ENCODE measurements at regions of chr11 and their contacts with region 1.

Region 1: DNA sequence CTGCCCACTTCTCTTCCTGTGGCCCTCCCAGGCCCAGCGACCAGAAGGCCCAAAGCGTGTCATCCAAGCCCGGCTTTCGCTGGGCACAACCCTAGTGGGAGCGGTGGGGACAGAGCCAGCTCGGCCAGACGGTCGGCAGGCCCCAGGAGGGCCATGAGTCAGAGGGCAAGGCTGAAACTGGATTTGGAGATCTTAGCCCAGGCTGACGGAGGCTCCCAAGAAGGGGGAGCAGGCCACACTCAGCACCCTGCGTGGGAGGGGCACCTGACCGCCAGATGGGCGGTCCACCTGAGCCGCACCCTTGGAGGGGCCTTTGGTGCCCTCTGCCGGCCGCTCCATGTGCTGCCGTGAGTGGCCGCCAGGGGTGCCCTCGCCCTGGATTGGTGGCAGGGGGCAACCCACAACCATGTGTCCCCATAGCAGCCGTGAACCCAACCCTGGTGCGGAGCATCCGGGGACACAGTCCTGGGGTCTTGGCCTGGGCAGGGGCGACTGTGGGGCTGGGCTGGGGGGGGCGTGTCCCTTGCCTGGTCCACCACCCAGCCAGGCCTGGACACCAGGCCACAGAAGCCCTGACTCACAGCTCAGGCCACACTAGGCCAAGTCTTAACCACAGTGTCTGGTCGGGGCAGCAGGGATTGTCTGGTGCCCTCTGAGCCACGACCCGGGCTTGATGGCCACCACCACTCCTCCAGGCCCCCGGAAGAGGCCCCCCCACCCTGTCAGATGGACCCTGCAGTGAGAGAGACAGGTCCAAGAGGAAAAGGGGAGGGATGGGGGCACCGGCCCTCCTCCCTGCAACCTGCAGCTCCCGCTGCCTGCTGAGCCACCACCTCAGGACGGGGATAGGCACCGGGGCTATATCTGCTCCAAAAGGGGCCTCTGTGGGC is 19.2 kb upstream of the TALDO1 start:
- DNase-seq: peak; percentile 88 to 92 (median 89)
- H3K4me3 ChIP-seq: no peak overlapping the region
- H3K27ac ChIP-seq: peak overlapping the region; percentile 39 to 57
- H3K4me1 ChIP-seq: peaks cover 17% of the 10 kb centered on the region
- H3K27me3 ChIP-seq: no peaks in the 10 kb centered on the region
- CTCF ChIP-seq: peak; percentile 85 to 99 (median 99)
- EP300 ChIP-seq: no peak
- POLR2A ChIP-seq: no peak

Region 2: GRCh38 chr11:554824-555472 is 173.2 kb before region 1 on chr11:
- intact Hi-C with region 1: loop called (anchors 2 to 5 kb)
- DNase-seq: peak in 2 of 5 donors; percentile 66 to 73
- H3K4me3 ChIP-seq: peak overlapping the region; percentile 12
- H3K27ac ChIP-seq: peak overlapping the region in 1 of 2 donors; percentile 7
- H3K4me1 ChIP-seq: peaks cover 4% of the 10 kb centered on the region
- H3K27me3 ChIP-seq: peaks cover 3% of the 10 kb centered on the region
- CTCF ChIP-seq: peak; percentile 18 to 44 (median 32)
- EP300 ChIP-seq: no peak
- POLR2A ChIP-seq: no peak

Region 3: DNA sequence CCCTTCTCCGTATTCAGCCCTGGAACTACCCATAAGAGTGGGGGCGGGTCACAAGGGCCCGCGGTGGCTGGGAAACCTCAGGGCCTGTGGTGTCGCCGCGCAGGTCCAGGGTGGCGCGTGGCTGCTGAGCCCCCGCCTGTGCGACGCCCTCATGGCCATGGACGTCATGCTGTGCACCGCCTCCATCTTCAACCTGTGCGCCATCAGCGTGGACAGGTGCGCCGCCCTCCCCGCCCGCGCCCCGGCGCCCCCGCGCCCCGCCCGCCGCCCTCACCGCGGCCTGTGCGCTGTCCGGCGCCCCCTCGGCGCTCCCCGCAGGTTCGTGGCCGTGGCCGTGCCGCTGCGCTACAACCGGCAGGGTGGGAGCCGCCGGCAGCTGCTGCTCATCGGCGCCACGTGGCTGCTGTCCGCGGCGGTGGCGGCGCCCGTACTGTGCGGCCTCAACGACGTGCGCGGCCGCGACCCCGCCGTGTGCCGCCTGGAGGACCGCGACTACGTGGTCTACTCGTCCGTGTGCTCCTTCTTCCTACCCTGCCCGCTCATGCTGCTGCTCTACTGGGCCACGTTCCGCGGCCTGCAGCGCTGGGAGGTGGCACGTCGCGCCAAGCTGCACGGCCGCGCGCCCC is 88.7 kb before region 1 on chr11:
- intact Hi-C with region 1: no loop called
- DNase-seq: no peak
- H3K4me3 ChIP-seq: no peak overlapping the region
- H3K27ac ChIP-seq: no peak overlapping the region
- H3K4me1 ChIP-seq: peaks cover 7% of the 10 kb centered on the region
- H3K27me3 ChIP-seq: no peaks in the 10 kb centered on the region
- CTCF ChIP-seq: no peak
- EP300 ChIP-seq: no peak
- POLR2A ChIP-seq: no peak

Region 4: DNA sequence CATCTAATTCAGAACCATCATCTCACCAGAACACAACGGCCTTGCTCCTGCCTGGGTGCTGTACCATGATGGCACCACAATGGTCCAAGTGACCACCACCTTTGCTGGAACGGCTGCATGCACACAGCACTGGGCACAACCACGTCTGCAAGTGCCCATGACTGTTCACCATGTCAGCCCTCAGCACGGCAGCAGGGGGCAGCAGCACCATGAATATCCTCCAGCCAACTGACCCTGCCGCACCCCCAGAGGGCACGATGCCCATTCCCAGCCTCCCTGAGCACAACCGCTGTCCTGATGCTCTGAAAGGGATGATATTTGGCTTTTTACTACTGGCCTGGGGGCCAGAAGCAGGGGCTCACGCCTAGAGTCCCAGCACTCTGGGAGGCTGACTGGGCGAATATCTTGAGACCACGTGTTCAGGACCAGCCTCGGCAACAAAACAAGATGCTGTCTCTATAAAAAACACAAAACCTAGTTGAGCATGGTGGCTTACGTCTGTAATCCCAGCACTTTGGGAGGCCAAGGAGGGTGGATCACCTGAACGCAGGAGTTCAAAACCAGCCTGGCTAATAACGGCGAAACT is 65.3 kb before region 1 on chr11:
- intact Hi-C with region 1: loop called in 3 of 4 experiments (anchors 2 to 5 kb)
- DNase-seq: peak; percentile 68 to 87 (median 81)
- H3K4me3 ChIP-seq: no peak overlapping the region
- H3K27ac ChIP-seq: no peak overlapping the region
- H3K4me1 ChIP-seq: peaks cover 6% of the 10 kb centered on the region
- H3K27me3 ChIP-seq: no peaks in the 10 kb centered on the region
- CTCF ChIP-seq: peak; percentile 55 to 67 (median 67)
- EP300 ChIP-seq: no peak
- POLR2A ChIP-seq: peak; percentile 12

Region 5: DNA sequence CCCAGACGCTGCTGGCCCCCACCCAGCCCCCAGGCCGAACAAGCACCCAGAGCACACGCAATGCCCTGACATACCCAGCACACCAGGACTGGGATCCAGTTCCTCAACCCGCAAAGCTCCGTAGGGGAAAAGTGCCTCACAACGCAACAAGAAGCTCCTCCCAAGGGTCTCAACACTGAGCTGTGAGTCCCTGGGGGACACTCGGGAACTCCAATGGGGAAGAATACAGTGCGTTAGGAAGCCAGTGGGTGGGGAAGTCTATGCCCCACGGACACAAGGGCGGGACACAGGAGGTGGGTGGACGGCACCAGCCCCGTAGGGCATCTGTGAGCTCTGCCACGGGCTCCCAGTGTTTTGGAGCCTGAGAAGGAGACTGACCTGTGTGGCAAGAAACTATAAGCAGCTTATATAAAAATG is 34.7 kb before region 1 on chr11:
- intact Hi-C with region 1: no loop called
- DNase-seq: no peak
- H3K4me3 ChIP-seq: no peak overlapping the region
- H3K27ac ChIP-seq: no peak overlapping the region
- H3K4me1 ChIP-seq: peaks cover 13% of the 10 kb centered on the region
- H3K27me3 ChIP-seq: no peaks in the 10 kb centered on the region
- CTCF ChIP-seq: no peak
- EP300 ChIP-seq: no peak
- POLR2A ChIP-seq: no peak

Region 6: DNA sequence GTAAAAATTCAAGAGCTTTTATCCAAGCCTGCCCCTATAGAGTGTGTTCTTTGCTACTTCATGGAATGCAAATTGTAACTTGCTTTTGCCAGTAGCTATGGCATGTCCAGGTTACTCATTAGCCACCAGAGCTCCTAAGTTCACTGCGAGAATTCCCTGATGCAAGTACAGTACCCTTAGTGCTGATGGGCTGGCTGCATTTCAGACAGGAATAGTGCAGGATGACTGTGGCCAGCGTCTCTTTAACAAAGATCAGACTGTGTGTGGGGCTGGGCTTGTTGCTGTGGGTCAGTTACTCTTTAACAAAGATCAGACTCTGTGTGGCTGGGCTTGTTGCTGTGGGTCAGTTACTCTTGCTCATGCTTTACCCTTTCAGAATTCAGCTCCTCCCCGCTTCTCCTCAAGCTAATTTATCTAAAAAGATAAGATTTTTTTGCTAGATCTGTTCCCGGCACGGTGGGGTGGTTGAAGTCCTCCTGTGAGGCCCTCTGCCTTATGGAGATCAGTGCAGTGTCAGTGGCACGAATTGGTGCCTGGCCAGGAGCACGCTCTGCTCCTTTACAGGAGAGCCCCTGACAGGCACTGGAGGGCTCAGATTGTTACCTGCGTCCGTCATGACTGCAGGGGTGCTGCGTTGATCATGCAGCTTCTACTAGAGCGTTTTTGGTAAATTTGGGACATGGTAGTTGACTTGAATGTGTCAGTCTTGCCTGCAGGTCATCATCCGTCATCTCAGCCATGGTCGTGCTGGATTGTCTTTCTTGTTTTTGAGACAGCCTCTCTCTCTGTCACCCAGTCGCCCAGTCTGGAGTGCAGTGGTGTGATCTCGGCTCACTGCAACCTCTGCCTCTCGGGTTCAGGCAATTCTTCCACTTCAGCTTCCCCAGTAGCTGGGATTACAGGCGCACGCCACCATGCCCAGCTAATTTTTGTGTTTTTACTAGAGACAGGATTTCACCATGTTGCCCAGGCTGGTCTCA is 224.6 kb after region 1 on chr11:
- intact Hi-C with region 1: no loop called
- DNase-seq: no peak
- H3K4me3 ChIP-seq: no peak overlapping the region
- H3K27ac ChIP-seq: no peak overlapping the region
- H3K4me1 ChIP-seq: no peaks in the 10 kb centered on the region
- H3K27me3 ChIP-seq: no peaks in the 10 kb centered on the region
- CTCF ChIP-seq: no peak
- EP300 ChIP-seq: no peak
- POLR2A ChIP-seq: no peak

Measured in ovary (tissue), 10 donors.